Activated T-helper 1 cell treated with anti-CD3 and anti-CD28 coated beads, Interleukin-12 subunit alpha, Interleukin-12 subunit beta, Interleukin-2, Interleukin-4 antibody, amounts not matched to agents 30 ng/mL and 10 ng/mL and 1 ng/mL, durations not matched to agents 14 hours and 24 hours and 36 hours (primary cell): ENCODE measurements at regions of chr7 and their contacts with region 1.

Region 1: GRCh38 chr7:34928049-34928448 is 109.2 kb downstream of the DPY19L1 start:
- DNase-seq: peak; percentile 5
- H3K4me3 Mint-ChIP-seq: no peak overlapping the region
- H3K27ac Mint-ChIP-seq: no peak overlapping the region
- H3K4me1 Mint-ChIP-seq: no peaks in the 10 kb centered on the region
- H3K27me3 Mint-ChIP-seq: no peaks in the 10 kb centered on the region

Region 2: DNA sequence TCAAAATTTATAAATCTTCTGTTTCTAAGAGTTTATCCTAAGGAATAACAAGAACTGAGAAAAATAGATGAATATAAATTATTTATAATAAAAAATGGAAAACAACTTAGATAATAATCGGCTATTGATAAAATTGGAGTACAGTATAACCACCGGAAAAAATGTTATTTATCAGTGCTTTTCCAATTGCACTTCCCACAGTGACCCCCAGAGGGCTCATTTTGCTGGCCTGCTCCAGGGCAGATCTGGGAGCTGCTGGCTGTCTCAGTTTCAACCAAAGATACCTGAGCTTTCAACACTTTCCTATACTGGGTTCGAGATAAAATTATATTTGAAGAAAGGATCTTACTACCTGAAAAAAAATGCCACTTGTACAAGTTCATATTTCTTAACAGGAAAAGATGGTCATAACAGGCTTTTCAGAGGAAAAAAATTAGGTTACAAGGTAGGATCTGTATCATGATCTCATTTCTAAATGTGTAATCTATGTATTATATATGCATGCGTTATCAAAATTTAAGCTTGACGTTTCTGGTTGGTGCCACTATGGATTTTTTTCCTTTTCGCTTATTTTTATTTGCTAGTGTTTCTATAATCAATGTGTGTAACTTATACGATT is 104.3 kb before region 1 on chr7:
- intact Hi-C with region 1: loop called (anchors 1 kb)
- DNase-seq: peak; percentile 11
- H3K4me3 Mint-ChIP-seq: no peak overlapping the region
- H3K27ac Mint-ChIP-seq: no peak overlapping the region
- H3K4me1 Mint-ChIP-seq: no peaks in the 10 kb centered on the region
- H3K27me3 Mint-ChIP-seq: peaks cover 2% of the 10 kb centered on the region